WTC11 (cell line): ENCODE measurements at regions of chr12 and their contacts with region 1.

Region 1: DNA sequence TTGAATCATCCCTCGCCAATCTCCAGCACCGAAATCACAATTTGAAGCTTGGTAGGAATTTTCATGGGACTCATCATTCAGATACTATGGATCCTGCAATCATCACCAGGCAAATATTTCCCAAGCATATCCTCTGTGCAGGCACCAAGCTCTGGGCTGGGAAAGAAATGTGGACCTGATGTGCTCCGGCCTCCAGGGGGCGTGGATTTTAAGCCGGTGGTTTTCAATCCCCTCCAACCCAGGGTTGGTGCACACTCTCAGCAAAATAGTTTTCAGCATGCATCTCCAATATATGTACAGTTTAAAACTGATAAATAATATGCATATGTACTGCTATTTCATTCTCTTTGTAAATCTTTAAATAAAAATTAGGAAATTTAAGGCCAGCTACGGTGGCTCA is 98.9 kb downstream of the RBM19 start:
- DNase-seq: peak; percentile 62
- ATAC-seq: peak; percentile 50
- H3K4me3 Mint-ChIP-seq: no peak overlapping the region
- H3K27ac Mint-ChIP-seq: no peak overlapping the region
- H3K4me1 Mint-ChIP-seq: peaks cover 20% of the 10 kb centered on the region
- H3K27me3 Mint-ChIP-seq: no peaks in the 10 kb centered on the region
- CTCF ChIP-seq: peak; percentile 26; the same call in 1 of the 2 replicates

Region 2: GRCh38 chr12:113880988-113881962 is 14.0 kb after region 1 on chr12:
- CTCF ChIA-PET with region 1: interaction called, 11 read pairs
- POLR2A ChIA-PET with region 1: no interaction called
- DNase-seq: no peak
- ATAC-seq: no peak
- H3K4me3 Mint-ChIP-seq: no peak overlapping the region
- H3K27ac Mint-ChIP-seq: peak overlapping the region; percentile 3; the same call in 1 of the 2 replicates
- H3K4me1 Mint-ChIP-seq: no peaks in the 10 kb centered on the region
- H3K27me3 Mint-ChIP-seq: no peaks in the 10 kb centered on the region
- CTCF ChIP-seq: no peak

Region 3: DNA sequence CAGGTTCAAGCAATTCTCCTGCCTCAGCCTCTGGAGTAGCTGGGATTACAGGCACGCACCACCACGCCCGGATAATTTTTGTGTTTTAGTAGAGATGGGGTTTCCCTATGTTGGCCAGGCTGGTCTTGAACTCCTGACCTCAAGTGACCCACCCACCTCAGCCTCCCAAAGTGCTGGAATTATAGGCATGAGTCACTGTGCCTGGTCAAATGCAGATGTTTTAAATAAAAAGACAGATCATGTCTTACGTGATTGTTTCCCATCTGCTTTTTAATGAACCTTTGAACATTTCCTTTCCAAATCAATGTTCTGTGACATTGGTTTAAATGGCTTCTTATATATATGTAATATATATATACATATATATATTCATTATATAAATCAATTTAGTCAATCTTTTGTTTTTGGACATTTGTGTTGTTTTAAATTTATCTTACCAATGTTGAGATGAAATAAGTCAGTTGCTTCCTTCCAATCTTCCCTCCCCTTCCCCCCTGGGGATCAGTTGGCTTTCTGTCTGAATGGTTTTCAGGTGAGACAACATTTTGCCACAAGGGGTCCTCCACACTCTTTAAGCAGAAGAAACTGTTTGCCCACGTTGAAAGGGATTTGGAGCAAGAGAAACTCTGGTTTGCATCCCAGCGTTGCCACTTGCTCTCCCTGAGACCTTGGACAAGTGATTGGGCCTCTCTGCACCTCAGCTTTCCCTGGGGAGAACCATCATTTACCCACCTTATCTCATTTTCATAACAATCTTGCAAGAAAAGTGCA is 146.5 kb after region 1 on chr12:
- CTCF ChIA-PET with region 1: no interaction called
- POLR2A ChIA-PET with region 1: no interaction called
- DNase-seq: peak; percentile 52
- ATAC-seq: peak; percentile 80
- H3K4me3 Mint-ChIP-seq: no peak overlapping the region
- H3K27ac Mint-ChIP-seq: no peak overlapping the region
- H3K4me1 Mint-ChIP-seq: 0 out of 2 replicates have a peak, but pooled peaks cover 3% of the 10 kb centered on the region
- H3K27me3 Mint-ChIP-seq: peaks cover 8% of the 10 kb centered on the region
- CTCF ChIP-seq: no peak